ENCODE measurements at regions of chr10 and their contacts with region 1.

Region 1: DNA sequence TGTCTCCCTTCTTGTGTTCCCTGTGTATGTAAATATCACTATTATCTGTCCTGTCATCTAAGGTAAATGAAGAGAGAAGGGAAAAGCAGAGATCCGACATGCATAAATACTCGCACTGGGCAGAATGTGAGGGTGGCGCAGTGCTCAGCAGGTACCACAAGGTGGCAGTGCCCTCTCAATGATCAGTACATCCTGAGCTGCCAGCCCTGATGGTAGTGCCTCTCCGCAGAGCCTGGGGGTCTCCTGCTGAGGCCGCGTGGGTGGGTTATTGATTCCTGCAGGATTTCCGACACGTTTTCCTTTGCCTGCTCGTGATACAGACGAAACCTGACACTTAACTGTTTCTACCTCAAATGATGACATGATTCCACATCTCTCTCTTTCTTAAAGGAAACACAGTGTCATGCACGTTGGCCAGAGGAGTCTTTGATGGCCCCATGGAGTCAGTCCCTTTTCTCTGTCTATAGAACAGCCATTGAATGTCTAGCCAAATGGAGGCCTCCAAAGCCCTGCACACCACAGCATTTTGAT is 19.8 kb downstream of the RGR start:
- DNase-seq: peak; percentile 73
- ATAC-seq: peak; percentile 91
- H3K4me3 ChIP-seq: no peak overlapping the region
- H3K4me3 Mint-ChIP-seq: no peak overlapping the region
- H3K27ac ChIP-seq: no peak overlapping the region
- H3K27ac Mint-ChIP-seq: no peak overlapping the region
- H3K4me1 ChIP-seq: no peaks in the 10 kb centered on the region
- H3K4me1 Mint-ChIP-seq: no peaks in the 10 kb centered on the region
- H3K27me3 ChIP-seq: peaks cover 0 to 18% (median 4%) of the 10 kb centered on the region in 4 experiments
- H3K27me3 Mint-ChIP-seq: peaks cover 49% of the 10 kb centered on the region
- CTCF ChIP-seq: peak; percentile 96

Region 2: GRCh38 chr10:84375011-84375410 is 110.3 kb after region 1 on chr10:
- CTCF ChIA-PET with region 1: interaction called, 8 read pairs
- POLR2A ChIA-PET with region 1: no interaction called
- intact Hi-C with region 1: loop called (anchors 2 kb)
- DNase-seq: peak; percentile 64
- ATAC-seq: no peak
- H3K4me3 ChIP-seq: no peak overlapping the region
- H3K4me3 Mint-ChIP-seq: no peak overlapping the region
- H3K27ac ChIP-seq: no peak overlapping the region
- H3K27ac Mint-ChIP-seq: no peak overlapping the region
- H3K4me1 ChIP-seq: no peaks in the 10 kb centered on the region
- H3K4me1 Mint-ChIP-seq: peaks cover 4% of the 10 kb centered on the region
- H3K27me3 ChIP-seq: no peaks in the 10 kb centered on the region
- H3K27me3 Mint-ChIP-seq: no peaks in the 10 kb centered on the region
- CTCF ChIP-seq: peak; percentile 80

Region 3: GRCh38 chr10:84531396-84531795 is 266.7 kb after region 1 on chr10:
- CTCF ChIA-PET with region 1: interaction called, 267 read pairs
- POLR2A ChIA-PET with region 1: no interaction called
- intact Hi-C with region 1: no loop called
- DNase-seq: no peak
- ATAC-seq: no peak
- H3K4me3 ChIP-seq: no peak overlapping the region
- H3K4me3 Mint-ChIP-seq: no peak overlapping the region
- H3K27ac ChIP-seq: no peak overlapping the region
- H3K27ac Mint-ChIP-seq: no peak overlapping the region
- H3K4me1 ChIP-seq: no peaks in the 10 kb centered on the region
- H3K4me1 Mint-ChIP-seq: no peaks in the 10 kb centered on the region
- H3K27me3 ChIP-seq: no peaks in the 10 kb centered on the region
- H3K27me3 Mint-ChIP-seq: peaks cover 13% of the 10 kb centered on the region
- CTCF ChIP-seq: no peak

Region 4: GRCh38 chr10:84551437-84552120 is 286.9 kb after region 1 on chr10:
- CTCF ChIA-PET with region 1: no interaction called
- POLR2A ChIA-PET with region 1: no interaction called
- intact Hi-C with region 1: no loop called
- DNase-seq: no peak
- ATAC-seq: no peak
- H3K4me3 ChIP-seq: no peak overlapping the region
- H3K4me3 Mint-ChIP-seq: no peak overlapping the region
- H3K27ac ChIP-seq: no peak overlapping the region
- H3K27ac Mint-ChIP-seq: no peak overlapping the region
- H3K4me1 ChIP-seq: no peaks in the 10 kb centered on the region
- H3K4me1 Mint-ChIP-seq: no peaks in the 10 kb centered on the region
- H3K27me3 ChIP-seq: peaks cover 0 to 5% (median 0%) of the 10 kb centered on the region in 4 experiments
- H3K27me3 Mint-ChIP-seq: peaks cover 20% of the 10 kb centered on the region
- CTCF ChIP-seq: no peak

Region 5: DNA sequence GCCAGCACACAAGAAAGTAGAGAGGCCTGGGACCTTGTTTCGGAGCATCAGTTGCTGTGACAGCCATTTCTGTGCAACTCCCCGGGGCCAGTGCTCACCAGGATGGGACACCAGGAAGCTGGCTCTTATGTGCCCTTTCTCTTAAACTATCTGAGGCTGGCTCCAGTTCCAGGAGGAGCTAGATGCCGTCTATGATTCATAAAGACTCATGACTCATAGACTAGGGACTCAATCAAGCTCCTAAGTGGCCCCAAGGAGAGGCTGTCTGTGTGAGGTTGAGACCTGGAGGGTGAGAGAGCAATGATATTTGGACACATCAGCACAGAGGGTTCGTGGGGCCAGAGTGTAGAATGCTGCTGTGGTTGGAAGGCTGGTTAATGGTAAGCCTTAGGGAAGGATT is 643.8 kb after region 1 on chr10:
- CTCF ChIA-PET with region 1: no interaction called
- POLR2A ChIA-PET with region 1: no interaction called
- intact Hi-C with region 1: no loop called
- DNase-seq: no peak
- ATAC-seq: no peak
- H3K4me3 ChIP-seq: no peak overlapping the region
- H3K4me3 Mint-ChIP-seq: no peak overlapping the region
- H3K27ac ChIP-seq: no peak overlapping the region
- H3K27ac Mint-ChIP-seq: no peak overlapping the region
- H3K4me1 ChIP-seq: no peaks in the 10 kb centered on the region
- H3K4me1 Mint-ChIP-seq: no peaks in the 10 kb centered on the region
- H3K27me3 ChIP-seq: no peaks in the 10 kb centered on the region
- H3K27me3 Mint-ChIP-seq: no peaks in the 10 kb centered on the region
- CTCF ChIP-seq: no peak